Transverse colon (tissue), 4 donors: ENCODE measurements at regions of chr11 and their contacts with region 1.

Region 1: GRCh38 chr11:73177778-73178577 is 35.9 kb upstream of the FCHSD2 start:
- DNase-seq: peak; percentile 84
- H3K4me3 ChIP-seq: no peak overlapping the region
- H3K27ac ChIP-seq: peak overlapping the region; percentile 25 to 49 (median 38)
- H3K4me1 ChIP-seq: peaks cover 6 to 32% (median 9%) of the 10 kb centered on the region in 4 donors
- H3K27me3 ChIP-seq: no peaks in the 10 kb centered on the region
- CTCF ChIP-seq: peak; percentile 65 to 88 (median 78)
- EP300 ChIP-seq: no peak
- POLR2A ChIP-seq: no peak

Region 2: DNA sequence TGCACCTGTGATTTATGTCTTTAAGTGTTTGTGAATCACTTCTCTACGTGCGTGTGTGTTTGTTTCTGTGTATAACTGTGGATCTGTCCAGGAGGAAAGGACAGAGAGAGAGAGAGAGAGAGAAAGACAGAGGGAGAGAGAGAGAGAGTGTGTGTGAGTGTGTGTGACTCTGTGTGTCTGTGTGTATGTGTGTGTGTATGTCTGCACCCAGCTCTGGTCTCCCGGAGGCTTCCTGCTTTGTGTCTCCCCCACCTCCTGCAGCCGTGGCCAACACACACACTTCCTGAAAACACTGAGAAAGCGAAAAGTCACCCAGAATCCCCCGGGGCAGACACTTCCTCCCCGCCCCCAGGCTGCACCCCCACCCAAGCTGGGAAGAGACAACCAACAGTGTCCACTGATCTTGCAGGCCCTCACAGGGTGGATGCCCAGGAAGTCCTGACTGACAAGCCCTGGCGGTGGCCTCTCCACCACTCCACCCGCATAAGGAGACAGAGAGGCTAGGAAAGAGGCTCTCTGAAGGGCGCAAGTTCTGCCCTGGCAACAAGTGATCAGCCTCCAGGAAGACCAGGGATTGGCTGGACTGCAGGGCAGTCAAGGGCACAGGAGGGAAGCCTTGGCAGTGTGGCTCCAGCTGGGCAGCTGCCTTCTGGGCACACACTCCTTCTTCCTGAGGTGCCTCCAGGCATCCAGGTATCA is 455.8 kb before region 1 on chr11:
- in situ Hi-C with region 1: loop called in 1 of 4 experiments (anchors 10 kb)
- intact Hi-C with region 1: no loop called
- DNase-seq: peak; percentile 91
- H3K4me3 ChIP-seq: peak overlapping the region; percentile 45 to 81 (median 57)
- H3K27ac ChIP-seq: peak overlapping the region; percentile 86 to 93 (median 92)
- H3K4me1 ChIP-seq: peaks cover 25 to 54% (median 39%) of the 10 kb centered on the region in 4 donors
- H3K27me3 ChIP-seq: no peaks in the 10 kb centered on the region
- CTCF ChIP-seq: peak in 1 of 5 experiments; percentile 17
- EP300 ChIP-seq: no peak
- POLR2A ChIP-seq: peak; percentile 82

Region 3: DNA sequence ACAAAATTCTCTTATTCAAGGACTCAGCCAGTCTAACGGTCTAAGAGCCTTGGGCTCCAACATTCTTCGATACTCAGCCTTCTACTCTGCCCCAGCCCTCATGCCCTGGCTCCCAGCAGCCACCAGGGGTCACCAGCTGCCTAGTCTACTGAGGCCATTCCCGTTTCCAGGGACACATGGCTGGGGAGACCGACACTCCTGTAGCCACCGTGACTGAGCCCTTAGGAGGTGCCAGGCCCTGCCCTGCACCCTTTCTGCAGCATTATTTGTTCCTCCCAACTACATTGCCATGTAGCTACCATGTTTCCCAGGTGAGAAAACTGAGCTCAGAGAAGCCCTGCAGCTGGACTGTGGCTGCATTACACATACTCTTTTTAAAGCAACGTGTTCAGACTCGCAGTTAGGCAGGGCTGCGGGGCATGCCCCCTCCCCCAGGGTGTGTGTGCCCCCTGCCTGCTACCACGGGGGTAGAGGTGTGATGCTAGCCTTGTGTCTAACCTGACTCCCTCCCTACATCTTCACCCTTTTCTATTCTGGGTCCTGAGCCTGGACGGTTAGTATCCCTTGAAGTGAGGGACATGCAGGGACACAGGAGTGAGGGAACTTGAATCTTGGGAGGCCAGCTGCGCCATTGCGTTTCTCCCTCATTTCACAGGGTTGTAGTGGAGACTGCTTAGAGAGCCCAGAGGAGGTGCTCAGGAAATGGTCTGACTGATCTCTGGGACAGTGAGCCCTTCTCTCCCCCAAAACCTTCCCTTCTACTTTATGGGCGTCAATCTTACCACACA is 346.3 kb before region 1 on chr11:
- in situ Hi-C with region 1: loop called (anchors 5 to 10 kb)
- intact Hi-C with region 1: loop called (anchors 2 kb)
- DNase-seq: peak; percentile 83
- H3K4me3 ChIP-seq: no peak overlapping the region
- H3K27ac ChIP-seq: no peak overlapping the region
- H3K4me1 ChIP-seq: peaks cover 0 to 14% (median 9%) of the 10 kb centered on the region in 4 donors
- H3K27me3 ChIP-seq: no peaks in the 10 kb centered on the region
- CTCF ChIP-seq: peak; percentile 93 to 94 (median 94)
- EP300 ChIP-seq: no peak
- POLR2A ChIP-seq: no peak

Region 4: GRCh38 chr11:72864702-72865655 is 313.0 kb before region 1 on chr11:
- in situ Hi-C with region 1: no loop called
- intact Hi-C with region 1: no loop called
- DNase-seq: no peak
- H3K4me3 ChIP-seq: no peak overlapping the region
- H3K27ac ChIP-seq: peak overlapping the region in 1 of 4 donors; percentile 8
- H3K4me1 ChIP-seq: peaks cover 0 to 18% (median 4%) of the 10 kb centered on the region in 4 donors
- H3K27me3 ChIP-seq: no peaks in the 10 kb centered on the region
- CTCF ChIP-seq: no peak
- EP300 ChIP-seq: no peak
- POLR2A ChIP-seq: no peak

Region 5: DNA sequence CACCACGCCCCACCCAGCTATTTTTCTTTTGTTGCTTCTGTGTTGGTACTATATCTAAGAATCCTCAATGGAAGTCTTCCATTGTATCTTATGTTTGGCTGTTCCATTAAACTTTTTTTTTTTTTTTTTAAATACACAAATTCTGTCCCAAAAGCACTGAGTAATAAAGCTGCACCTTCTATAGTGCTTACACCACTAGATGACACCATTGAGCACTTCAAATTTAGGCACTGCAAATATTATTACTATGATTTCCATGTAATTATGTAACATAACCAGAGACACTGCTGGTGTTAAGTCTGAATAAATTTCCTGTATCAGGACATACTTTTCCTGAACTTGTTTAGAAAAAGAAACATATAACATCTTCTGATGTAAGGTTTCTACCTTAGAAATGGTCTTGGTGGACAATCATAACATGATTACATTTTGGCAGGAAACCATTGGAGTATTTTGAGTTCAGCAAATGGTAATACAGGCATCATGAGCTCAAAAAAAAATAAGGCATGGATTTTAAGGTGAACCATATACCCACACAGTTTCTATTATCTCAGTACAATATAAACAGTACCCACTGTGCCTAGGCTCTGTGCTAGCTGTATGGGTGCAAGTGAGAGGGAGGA is 253.3 kb before region 1 on chr11:
- in situ Hi-C with region 1: loop called in 2 of 4 experiments (anchors 10 kb)
- intact Hi-C with region 1: no loop called
- DNase-seq: no peak
- H3K4me3 ChIP-seq: no peak overlapping the region
- H3K27ac ChIP-seq: no peak overlapping the region
- H3K4me1 ChIP-seq: peaks cover 0 to 5% (median 0%) of the 10 kb centered on the region in 4 donors
- H3K27me3 ChIP-seq: no peaks in the 10 kb centered on the region
- CTCF ChIP-seq: peak; percentile 34 to 62 (median 58)
- EP300 ChIP-seq: no peak
- POLR2A ChIP-seq: no peak

Region 6: GRCh38 chr11:73141848-73142286 is 36.1 kb before region 1 on chr11:
- in situ Hi-C with region 1: no loop called
- intact Hi-C with region 1: loop called (anchors 5 kb)
- DNase-seq: peak; percentile 76
- H3K4me3 ChIP-seq: peak overlapping the region; percentile 70 to 81 (median 76)
- H3K27ac ChIP-seq: peak overlapping the region; percentile 93 to 98 (median 96)
- H3K4me1 ChIP-seq: peaks cover 9 to 43% (median 17%) of the 10 kb centered on the region in 4 donors
- H3K27me3 ChIP-seq: no peaks in the 10 kb centered on the region
- CTCF ChIP-seq: no peak
- EP300 ChIP-seq: no peak
- POLR2A ChIP-seq: no peak

Region 7: DNA sequence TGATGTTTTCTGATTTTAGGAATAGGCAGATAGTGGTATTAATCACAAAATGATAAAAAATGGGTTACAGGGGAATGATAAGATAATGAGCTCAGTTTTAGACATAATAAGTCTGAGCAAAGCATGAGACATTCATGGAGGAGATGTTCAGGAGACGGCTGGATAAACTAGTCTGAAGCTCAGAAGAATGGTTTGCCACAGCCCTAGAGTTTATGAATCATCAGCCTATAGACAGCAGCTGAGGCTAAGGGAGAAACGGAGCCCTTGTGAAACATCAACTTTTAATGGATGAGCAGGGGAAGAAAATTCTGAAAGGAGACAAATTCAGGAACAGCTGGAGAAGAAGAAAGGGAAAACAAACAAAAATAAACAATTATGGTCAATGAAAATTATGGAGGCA is 285.4 kb after region 1 on chr11:
- in situ Hi-C with region 1: no loop called
- intact Hi-C with region 1: no loop called
- DNase-seq: no peak
- H3K4me3 ChIP-seq: no peak overlapping the region
- H3K27ac ChIP-seq: no peak overlapping the region
- H3K4me1 ChIP-seq: no peaks in the 10 kb centered on the region
- H3K27me3 ChIP-seq: no peaks in the 10 kb centered on the region
- CTCF ChIP-seq: no peak
- EP300 ChIP-seq: no peak
- POLR2A ChIP-seq: no peak